Activated naive CD4-positive, alpha-beta T cell treated with anti-CD3 and anti-CD28 coated beads, Interleukin-2, amount 10 ng/mL, durations not matched to agents 7 days and 5 days (primary cell): ENCODE measurements at regions of chr19 and their contacts with region 1.

Region 1: DNA sequence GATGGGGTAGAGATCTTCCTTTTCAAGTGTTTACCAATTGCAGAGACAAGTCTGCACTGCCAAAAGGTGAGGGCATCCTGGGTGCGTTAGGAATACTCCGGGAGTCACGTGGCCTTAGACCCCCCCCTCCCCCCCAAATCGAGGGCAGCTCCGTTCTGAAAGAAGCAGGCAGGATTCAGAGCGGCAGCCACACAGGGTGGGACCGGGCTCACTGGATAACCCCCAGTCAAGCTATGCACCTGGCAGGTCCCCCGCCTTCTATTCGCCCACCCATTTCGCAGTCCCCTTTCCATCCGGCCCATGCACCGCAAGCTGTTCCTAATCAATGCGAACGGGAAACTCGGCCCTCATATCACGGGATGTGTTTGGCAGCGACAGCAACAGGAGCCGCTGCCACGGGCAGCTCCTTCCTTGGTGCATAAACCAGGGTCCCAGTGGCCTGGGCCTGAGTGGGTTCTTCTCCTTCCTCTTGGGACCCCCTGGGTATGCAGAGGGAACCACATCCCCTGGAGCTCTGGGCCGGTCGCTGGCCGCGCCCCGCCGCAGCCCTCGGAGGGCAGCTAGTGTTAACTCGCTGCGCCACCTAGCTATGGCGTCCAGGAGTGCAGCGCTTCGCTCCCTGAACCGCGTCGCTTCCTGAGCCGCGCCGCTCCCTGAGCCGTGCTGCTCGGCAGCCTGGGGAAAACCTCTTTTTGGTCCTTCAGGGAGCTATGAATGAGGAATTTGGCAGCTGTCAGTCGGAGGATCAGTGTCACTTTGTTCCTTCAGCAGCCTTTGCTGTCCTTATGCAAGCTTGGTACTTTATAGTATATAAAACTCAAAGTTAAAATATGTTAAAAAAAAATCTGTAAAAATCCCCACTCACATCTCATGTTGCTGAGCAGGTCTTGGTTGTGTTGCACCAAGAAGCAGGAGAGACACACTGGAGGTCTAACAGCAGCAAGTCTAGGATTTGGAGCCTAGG is 41.4 kb downstream of the LYL1 start:
- DNase-seq: peak; percentile 85
- H3K4me3 Mint-ChIP-seq: peak overlapping the region; percentile 67
- H3K27ac Mint-ChIP-seq: no peak overlapping the region
- H3K4me1 Mint-ChIP-seq: peaks cover 11% of the 10 kb centered on the region
- H3K27me3 Mint-ChIP-seq: peaks cover 63% of the 10 kb centered on the region

Region 2: GRCh38 chr19:12965017-12965811 is 96.0 kb before region 1 on chr19:
- CTCF ChIA-PET with region 1: interaction called, 35 read pairs
- DNase-seq: peak; percentile 87
- H3K4me3 Mint-ChIP-seq: peak overlapping the region; percentile 90
- H3K27ac Mint-ChIP-seq: peak overlapping the region; percentile 89
- H3K4me1 Mint-ChIP-seq: peaks cover 10% of the 10 kb centered on the region
- H3K27me3 Mint-ChIP-seq: peaks cover 28% of the 10 kb centered on the region

Region 3: GRCh38 chr19:12983542-12984142 is 77.6 kb before region 1 on chr19:
- CTCF ChIA-PET with region 1: interaction called, 81 read pairs
- DNase-seq: peak; percentile 80
- H3K4me3 Mint-ChIP-seq: no peak overlapping the region
- H3K27ac Mint-ChIP-seq: no peak overlapping the region
- H3K4me1 Mint-ChIP-seq: no peaks in the 10 kb centered on the region
- H3K27me3 Mint-ChIP-seq: peaks cover 20% of the 10 kb centered on the region

Region 4: GRCh38 chr19:13033819-13034611 is 27.2 kb before region 1 on chr19:
- CTCF ChIA-PET with region 1: interaction called, 71 read pairs
- DNase-seq: peak; percentile 63
- H3K4me3 Mint-ChIP-seq: no peak overlapping the region
- H3K27ac Mint-ChIP-seq: no peak overlapping the region
- H3K4me1 Mint-ChIP-seq: no peaks in the 10 kb centered on the region
- H3K27me3 Mint-ChIP-seq: peaks cover 13% of the 10 kb centered on the region

Region 5: DNA sequence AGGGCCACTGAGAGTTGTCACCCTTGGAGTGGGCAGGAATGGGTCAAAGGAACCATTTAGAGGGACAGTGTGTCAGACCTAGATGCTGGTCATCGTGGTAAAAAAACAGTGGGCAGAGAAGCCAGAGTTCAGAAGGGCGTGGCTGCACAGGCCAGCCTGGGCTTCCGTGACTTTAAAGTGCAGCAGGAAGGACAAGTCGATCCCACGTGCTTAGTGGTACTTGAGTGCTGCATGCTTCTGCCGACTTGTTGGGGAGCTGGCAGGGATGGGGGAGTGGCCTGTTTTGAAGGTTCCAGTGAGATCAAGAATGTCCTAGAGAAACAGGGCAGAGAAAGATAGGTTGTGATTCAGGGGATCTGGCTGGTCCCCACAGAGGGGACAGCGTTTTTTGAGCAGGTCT is 24.4 kb after region 1 on chr19:
- CTCF ChIA-PET with region 1: interaction called, 17 read pairs
- DNase-seq: no peak
- H3K4me3 Mint-ChIP-seq: no peak overlapping the region
- H3K27ac Mint-ChIP-seq: no peak overlapping the region
- H3K4me1 Mint-ChIP-seq: no peaks in the 10 kb centered on the region
- H3K27me3 Mint-ChIP-seq: peaks cover 28% of the 10 kb centered on the region